Activated B cell treated with CpG ODN at 0.5 μM for 24 hours (primary cell): ENCODE measurements at regions of chr1 and their contacts with region 1.

Region 1: GRCh38 chr1:110460253-110461220 is 9.6 kb downstream of the PROK1 start:
- DNase-seq: peak; percentile 68
- ATAC-seq: peak; percentile 99
- H3K4me3 Mint-ChIP-seq: no peak overlapping the region
- H3K27ac Mint-ChIP-seq: no peak overlapping the region
- H3K4me1 Mint-ChIP-seq: no peaks in the 10 kb centered on the region
- H3K27me3 Mint-ChIP-seq: no peaks in the 10 kb centered on the region
- CTCF ChIP-seq: peak; percentile 96

Region 2: DNA sequence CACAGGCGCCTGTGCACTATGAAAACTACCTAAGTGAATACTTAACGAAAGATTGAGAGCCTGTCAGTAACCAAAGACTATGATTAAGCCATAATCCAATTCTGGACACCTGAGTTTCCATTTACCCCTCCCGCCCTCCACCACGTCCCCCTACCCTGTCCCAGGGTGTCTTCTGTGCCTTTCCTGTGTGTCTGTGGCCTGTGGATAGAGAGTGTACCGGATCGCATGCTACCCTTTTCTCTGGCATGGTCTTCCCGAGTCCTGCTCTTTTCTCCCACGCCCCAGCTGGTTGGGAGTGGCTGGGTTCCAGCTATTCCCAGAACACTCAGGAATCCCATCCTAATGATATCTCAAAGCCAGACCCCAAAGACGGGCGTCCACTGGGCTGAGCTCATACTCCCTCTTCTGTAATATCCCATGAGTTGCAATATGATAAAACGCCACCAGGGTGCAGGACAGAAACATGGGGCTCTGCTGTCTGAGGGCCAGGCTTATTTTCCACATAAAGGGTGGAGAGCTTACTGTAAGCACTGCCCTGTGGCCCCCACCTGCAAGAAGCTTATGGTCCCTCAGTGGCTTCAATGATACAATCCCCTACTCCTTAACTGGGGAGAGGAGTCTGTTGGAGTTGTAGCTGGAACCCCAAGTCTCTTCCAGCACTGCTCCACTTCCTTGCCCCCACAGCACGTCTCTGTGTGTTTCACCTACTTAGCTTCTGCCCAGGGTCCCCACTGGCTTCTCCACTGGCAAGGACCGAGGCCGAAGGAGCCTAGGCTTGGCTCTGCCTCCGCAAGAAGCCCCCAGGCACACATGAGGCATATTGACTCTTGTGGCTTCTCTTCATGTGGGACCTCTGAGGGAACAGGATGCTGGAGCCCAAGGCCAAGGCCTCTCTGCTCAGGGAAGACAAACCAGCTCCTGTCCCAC is 372.5 kb before region 1 on chr1:
- CTCF ChIA-PET with region 1: interaction called, 8 read pairs
- POLR2A ChIA-PET with region 1: no interaction called
- intact Hi-C with region 1: loop called (anchors 5 kb)
- DNase-seq: no peak
- ATAC-seq: peak; percentile 75
- H3K4me3 Mint-ChIP-seq: no peak overlapping the region
- H3K27ac Mint-ChIP-seq: no peak overlapping the region
- H3K4me1 Mint-ChIP-seq: peaks cover 9% of the 10 kb centered on the region
- H3K27me3 Mint-ChIP-seq: peaks cover 21% of the 10 kb centered on the region
- CTCF ChIP-seq: no peak

Region 3: DNA sequence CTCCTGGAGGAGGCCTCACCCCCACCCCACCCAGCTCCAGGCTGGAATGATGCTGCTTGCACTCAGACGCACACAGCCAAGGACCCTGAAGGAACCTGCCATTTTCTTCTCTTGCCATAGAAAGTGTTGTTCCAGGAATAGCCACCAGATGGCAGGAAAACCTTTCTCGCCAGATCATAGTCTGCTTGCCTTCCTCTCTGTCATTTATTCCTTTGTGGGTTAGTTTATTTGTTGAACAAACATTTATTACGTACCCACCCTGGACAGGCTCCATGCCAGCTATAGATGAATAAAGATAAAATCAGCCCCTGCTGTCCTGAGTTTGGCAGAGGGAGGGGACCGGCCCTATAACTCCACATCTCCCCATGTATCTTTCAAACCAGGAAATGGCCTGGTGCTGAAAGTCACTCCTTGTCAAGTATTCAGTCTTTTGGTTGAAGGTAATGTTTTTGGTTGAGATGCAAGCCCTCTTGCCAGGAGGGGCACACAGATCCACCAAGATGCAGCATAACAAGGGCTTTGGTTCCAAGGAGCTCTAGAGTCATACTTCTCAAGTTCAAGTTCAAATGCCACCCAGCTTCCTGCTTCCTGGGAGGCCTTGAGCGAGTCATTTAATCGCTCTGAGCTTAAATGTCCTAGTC is 257.4 kb before region 1 on chr1:
- CTCF ChIA-PET with region 1: interaction called, 215 read pairs
- POLR2A ChIA-PET with region 1: interaction called, 23 read pairs
- intact Hi-C with region 1: loop called (anchors 1 kb)
- DNase-seq: no peak
- ATAC-seq: peak; percentile 74
- H3K4me3 Mint-ChIP-seq: no peak overlapping the region
- H3K27ac Mint-ChIP-seq: no peak overlapping the region
- H3K4me1 Mint-ChIP-seq: peaks cover 12% of the 10 kb centered on the region
- H3K27me3 Mint-ChIP-seq: no peaks in the 10 kb centered on the region
- CTCF ChIP-seq: peak; percentile 37

Region 4: DNA sequence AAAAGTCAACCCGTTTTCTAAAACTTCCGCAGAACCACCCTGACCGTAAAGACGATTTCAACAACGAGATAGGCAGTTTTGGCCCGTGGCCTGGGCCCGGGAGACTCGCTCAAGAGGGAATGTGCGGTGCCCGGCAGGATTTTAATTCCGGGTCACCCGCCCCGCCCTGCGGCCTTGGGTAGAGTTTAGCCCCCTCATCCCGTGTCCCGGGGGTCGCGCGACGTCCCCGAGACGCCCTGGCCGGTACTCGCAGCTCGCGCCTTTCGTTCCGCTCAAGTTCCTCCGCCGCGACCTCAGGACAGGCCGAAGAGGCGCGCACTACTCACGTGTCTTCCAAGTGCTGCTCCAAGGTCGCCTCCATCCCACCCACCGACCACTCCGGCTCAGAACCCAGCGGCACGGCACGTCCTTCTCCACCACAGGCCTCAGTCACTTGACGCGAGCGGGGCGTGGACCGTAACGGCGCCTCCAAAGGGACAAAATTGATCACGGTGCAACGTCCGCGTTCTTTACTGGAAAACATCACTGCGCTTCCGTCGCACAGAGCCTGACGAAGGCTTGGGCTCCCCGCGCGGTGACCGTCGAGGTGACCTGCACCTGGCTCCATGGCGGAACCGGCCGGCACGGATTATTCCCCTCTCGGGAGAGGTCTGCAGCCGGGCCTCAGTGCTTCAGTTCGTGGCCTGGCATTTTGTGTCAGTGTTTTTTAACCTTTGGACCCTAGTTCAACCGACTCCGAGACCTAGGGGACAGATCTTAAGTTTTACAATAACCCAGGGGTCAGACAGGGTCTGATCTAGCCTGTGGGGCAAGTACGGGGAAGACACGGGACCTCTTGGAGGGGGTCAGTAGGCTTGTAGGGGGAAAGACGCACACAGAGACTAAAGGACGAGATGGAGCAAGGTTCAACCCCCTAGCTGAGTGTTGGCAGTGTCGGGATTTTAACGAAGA is 53.0 kb before region 1 on chr1 and contains the start of gene LAMTOR5:
- CTCF ChIA-PET with region 1: interaction called, 53 read pairs
- POLR2A ChIA-PET with region 1: interaction called, 10 read pairs
- intact Hi-C with region 1: loop called (anchors 1 kb)
- DNase-seq: peak; percentile 84
- ATAC-seq: peak; percentile 91
- H3K4me3 Mint-ChIP-seq: peak within 1 kb of the TSS; percentile 97
- H3K27ac Mint-ChIP-seq: peak within 1 kb of the TSS; percentile 96
- H3K4me1 Mint-ChIP-seq: peaks cover 26% of the 10 kb centered on the region
- H3K27me3 Mint-ChIP-seq: no peaks in the 10 kb centered on the region
- CTCF ChIP-seq: no peak
- total RNA-seq, gene LAMTOR5: 160 and 172 TPM in 2 replicates

Region 5: GRCh38 chr1:110485725-110486124 is 25.2 kb after region 1 on chr1:
- CTCF ChIA-PET with region 1: no interaction called
- POLR2A ChIA-PET with region 1: no interaction called
- intact Hi-C with region 1: no loop called
- DNase-seq: no peak
- ATAC-seq: no peak
- H3K4me3 Mint-ChIP-seq: no peak overlapping the region
- H3K27ac Mint-ChIP-seq: no peak overlapping the region
- H3K4me1 Mint-ChIP-seq: no peaks in the 10 kb centered on the region
- H3K27me3 Mint-ChIP-seq: peaks cover 27% of the 10 kb centered on the region
- CTCF ChIP-seq: no peak

Region 6: DNA sequence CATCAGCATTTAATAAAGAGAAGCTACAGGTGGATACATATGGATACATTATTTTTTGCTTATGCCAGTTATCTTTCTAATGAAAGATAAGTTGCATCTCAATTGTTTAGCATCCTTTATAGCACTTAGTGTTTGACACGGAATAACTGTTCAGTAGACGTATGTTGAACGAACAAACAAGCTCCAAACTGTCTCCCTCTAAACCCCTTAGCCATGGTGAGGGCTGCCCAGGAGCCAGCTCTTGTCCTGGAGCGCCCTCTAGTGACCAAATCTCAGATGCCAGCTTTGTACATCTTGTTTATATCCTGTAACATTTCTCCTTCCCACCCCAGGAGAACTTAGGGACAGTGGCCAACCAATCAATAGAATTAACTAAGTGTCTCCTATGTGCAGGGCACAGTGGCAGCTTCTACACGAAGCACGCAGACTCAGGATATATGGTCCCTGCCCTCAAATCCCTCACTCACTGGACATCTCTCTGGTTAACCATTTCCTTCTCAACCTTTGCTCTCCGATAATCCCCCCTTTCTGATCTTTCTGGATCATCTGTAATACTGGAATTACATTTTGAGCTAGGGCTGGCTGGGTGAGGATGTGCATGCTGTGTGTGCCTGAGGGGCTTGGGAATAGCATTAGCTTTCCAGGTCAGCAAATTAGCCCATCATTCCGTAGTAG is 35.5 kb after region 1 on chr1:
- CTCF ChIA-PET with region 1: interaction called, 33 read pairs
- POLR2A ChIA-PET with region 1: interaction called, 4 read pairs
- intact Hi-C with region 1: loop called (anchors 1 kb)
- DNase-seq: peak; percentile 50
- ATAC-seq: peak; percentile 86
- H3K4me3 Mint-ChIP-seq: no peak overlapping the region
- H3K27ac Mint-ChIP-seq: no peak overlapping the region
- H3K4me1 Mint-ChIP-seq: no peaks in the 10 kb centered on the region
- H3K27me3 Mint-ChIP-seq: no peaks in the 10 kb centered on the region
- CTCF ChIP-seq: no peak

Region 7: GRCh38 chr1:110570307-110570706 is 109.8 kb after region 1 on chr1:
- CTCF ChIA-PET with region 1: no interaction called
- POLR2A ChIA-PET with region 1: no interaction called
- intact Hi-C with region 1: no loop called
- DNase-seq: no peak
- ATAC-seq: no peak
- H3K4me3 Mint-ChIP-seq: no peak overlapping the region
- H3K27ac Mint-ChIP-seq: no peak overlapping the region
- H3K4me1 Mint-ChIP-seq: no peaks in the 10 kb centered on the region
- H3K27me3 Mint-ChIP-seq: peaks cover 35% of the 10 kb centered on the region
- CTCF ChIP-seq: no peak